Activated T-helper 1 cell treated with anti-CD3 and anti-CD28 coated beads, Interleukin-12 subunit alpha, Interleukin-12 subunit beta, Interleukin-2, Interleukin-4 antibody, amounts not matched to agents 30 ng/mL and 10 ng/mL and 1 ng/mL, durations not matched to agents 14 hours and 24 hours and 36 hours (primary cell): ENCODE measurements at regions of chr9 and their contacts with region 1.

Region 1: DNA sequence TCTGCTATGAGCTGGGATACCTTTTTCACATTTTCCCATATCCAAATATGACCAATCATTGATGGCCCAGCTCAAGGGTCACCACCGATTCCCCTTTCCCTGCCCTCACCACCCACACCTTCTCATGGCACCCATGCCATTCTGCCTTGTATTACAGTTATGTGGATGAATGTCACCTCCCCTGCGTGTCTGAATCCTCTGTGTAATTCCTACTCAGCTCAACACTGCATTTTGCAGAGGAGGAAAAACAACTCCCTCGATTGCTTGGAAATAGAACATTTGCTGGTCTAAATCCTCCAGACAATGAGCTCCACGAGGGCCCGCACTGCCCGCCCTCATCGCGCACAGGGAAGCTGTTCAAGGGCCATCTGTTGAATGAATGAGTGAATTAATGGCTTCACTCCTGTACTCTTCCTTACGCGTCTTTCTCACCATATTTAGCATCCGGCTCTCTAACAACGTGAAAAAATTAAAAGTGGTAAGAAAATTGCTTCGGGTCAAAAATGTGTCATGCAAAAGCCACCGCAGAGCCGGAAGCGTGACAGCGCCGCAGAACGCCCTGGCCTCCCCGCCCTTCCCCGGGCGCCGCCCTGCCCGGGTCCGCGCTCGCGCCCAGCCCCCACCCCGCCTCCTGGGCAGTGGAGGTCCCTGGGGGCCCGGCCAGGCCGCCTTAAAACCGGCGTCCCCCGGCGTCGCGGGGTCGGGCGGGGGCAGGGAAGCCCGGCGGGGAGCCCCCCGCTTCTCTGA is 706 bp downstream of the SUSD1 start:
- DNase-seq: peak; percentile 73
- H3K4me3 Mint-ChIP-seq: peak overlapping the region; percentile 88
- H3K27ac Mint-ChIP-seq: peak overlapping the region; percentile 93
- H3K4me1 Mint-ChIP-seq: peaks cover 74% of the 10 kb centered on the region
- H3K27me3 Mint-ChIP-seq: peaks cover 1% of the 10 kb centered on the region

Region 2: DNA sequence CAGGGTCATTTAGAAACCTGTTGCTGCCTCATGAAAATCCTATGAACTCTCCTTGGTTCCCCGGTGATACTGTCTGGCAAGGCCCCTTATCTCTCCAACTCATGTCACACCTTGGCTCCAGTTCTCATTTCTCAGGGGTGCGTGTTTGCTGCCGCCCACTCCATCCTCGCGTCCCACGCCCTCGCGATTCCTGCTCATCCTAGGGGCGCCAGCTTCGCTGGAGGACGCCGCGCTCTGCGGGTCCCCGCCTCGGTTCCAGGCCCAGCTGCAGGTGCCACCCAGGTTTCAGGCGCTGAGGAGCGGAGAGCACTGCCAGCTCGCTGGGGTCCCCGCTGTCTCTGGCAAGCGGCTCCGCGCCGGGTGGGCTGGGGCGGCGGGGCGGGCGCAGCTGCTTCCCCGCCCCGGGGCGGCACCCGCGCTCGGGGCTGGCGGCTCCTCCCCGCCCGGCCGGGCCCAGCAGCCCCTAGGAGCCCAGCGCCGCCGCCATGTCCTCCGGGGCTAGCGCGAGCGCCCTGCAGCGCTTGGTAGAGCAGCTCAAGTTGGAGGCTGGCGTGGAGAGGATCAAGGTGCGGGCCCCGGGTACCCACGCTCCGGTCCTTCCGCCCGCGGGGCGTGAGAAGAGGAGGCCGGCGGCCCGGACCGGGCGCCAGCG is 513.1 kb before region 1 on chr9 and contains the start of gene GNG10:
- intact Hi-C with region 1: loop called (anchors 10 kb)
- DNase-seq: peak; percentile 66
- H3K4me3 Mint-ChIP-seq: peak within 1 kb of the TSS; percentile 89
- H3K27ac Mint-ChIP-seq: peak within 1 kb of the TSS; percentile 89
- H3K4me1 Mint-ChIP-seq: peaks cover 34% of the 10 kb centered on the region
- H3K27me3 Mint-ChIP-seq: no peaks in the 10 kb centered on the region
- total RNA-seq, gene GNG10: 30.7 and 35.4 TPM in 2 replicates

Region 3: DNA sequence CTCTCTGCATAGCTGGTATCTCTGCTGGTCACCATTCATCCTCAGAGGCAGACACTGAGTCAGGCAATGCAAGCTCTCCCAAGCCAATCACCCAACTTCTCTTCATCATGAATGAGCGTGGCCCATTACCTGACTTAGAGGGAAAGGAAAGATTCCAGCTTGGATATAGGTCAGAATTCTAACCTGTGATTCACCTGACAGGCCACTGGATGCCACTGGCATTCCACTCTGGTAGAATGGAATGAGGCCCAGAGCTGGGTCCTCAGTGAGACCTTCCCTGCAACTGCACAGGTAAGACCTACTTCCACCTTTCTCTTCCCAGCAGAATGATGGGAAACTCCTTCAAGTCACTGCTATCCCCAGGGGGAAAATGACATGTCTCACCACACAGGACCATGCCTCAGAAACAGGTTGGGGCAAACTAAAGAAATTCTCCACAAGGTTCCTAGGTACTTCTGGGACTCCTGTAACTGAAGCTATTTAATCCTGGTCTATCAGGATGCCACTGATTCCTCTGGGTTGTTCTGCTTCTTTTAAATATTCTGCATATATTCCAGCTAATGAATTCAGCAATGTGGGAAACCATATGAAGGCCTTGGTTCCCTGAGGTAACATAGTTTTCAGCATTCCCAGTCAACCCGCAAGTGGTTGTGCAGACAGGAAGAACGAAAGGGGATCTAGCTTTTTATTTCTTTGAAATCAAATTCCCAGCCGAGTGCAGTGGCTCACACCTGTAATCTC is 61.3 kb before region 1 on chr9:
- intact Hi-C with region 1: no loop called
- DNase-seq: no peak
- H3K4me3 Mint-ChIP-seq: no peak overlapping the region
- H3K27ac Mint-ChIP-seq: no peak overlapping the region
- H3K4me1 Mint-ChIP-seq: no peaks in the 10 kb centered on the region
- H3K27me3 Mint-ChIP-seq: no peaks in the 10 kb centered on the region

Region 4: DNA sequence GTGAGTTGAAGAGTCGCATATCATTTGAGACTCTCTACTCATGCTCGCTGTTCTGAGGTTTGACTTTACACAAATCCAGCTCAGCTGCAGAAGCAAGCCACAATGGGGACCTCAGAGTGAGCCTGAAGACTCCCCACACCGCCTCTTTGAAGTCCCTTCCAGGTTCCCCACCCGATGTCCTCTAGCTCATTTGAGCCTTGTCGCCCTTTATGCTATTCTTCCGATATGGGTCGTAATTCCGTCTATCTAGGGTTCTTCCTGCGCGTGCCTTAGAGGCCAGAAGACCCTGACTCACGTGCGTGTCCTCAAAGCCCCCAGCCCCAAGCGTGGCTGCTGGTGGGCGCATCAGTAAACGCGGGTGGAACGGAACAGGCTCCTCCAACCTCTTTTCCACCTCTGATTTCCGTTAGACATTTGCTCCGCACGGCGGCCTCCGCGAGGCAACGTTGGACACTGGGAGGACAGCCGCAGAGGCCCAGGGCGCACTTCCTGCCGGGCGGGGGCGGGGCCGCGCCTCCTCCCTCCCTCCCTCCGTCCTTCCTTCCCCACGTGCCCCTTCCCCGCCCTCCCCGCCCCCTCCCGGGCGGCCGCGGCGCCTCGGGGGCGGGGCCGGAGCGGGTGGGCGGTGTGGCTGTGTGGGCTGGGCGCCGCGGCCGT is 575.8 kb after region 1 on chr9 and contains the start of gene SNX30:
- intact Hi-C with region 1: loop called (anchors 1 kb)
- DNase-seq: peak; percentile 78
- H3K4me3 Mint-ChIP-seq: peak within 1 kb of the TSS; percentile 86
- H3K27ac Mint-ChIP-seq: peak within 1 kb of the TSS; percentile 88
- H3K4me1 Mint-ChIP-seq: peaks cover 67% of the 10 kb centered on the region
- H3K27me3 Mint-ChIP-seq: peaks cover 5% of the 10 kb centered on the region
- total RNA-seq, gene SNX30: 1.9 and 2.1 TPM in 2 replicates